IMR-90 (cell line): ENCODE measurements at regions of chr17 and their contacts with region 1.

Region 1: DNA sequence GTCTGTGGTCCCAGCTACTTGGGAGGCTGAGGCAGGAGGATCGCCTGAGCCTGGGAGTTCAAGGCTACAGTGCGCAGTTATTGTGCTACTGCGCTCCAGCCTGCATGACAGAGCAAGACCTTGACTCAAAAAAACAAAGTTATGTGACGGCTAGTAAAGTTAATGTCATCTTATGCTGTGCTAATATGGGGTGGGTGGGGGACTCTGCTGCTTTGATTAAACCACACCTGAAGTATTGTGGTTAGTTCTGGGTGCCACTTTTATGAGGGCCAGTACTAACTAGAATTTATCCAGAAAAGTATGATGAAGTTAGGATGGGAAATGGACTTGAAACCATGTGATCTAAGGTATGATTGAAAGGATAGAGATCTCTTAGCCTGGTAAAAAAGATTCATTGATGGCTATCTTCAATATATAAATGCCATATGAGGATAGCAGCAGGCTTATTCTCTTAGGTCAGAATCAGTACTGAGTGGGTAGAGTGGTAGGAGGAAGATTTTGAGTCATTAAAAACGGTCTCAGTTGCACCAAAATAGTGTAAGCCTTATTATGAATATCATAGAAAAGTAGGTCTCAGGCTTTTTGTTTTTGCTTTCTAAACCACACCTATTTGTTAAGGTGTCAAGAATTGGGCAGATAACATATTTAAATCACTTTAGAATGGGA is 5.6 kb downstream of the WSB1 start:
- DNase-seq: no peak
- ATAC-seq: no peak
- H3K4me3 ChIP-seq: no peak overlapping the region
- H3K27ac ChIP-seq: no peak overlapping the region
- H3K4me1 ChIP-seq: peaks cover 11% of the 10 kb centered on the region; the same call in 1 of the 2 replicates
- H3K27me3 ChIP-seq: no peaks in the 10 kb centered on the region
- CTCF ChIP-seq: no peak
- POLR2A ChIP-seq: no peak
- RAD21 ChIP-seq: no peak

Region 2: GRCh38 chr17:27315322-27315721 is 15.8 kb after region 1 on chr17:
- CTCF ChIA-PET with region 1: no interaction called
- POLR2A ChIA-PET with region 1: interaction called, 3 read pairs
- dilution Hi-C with region 1: no loop called
- in situ Hi-C with region 1: no loop called
- intact Hi-C with region 1: loop called (anchors 2 kb)
- DNase-seq: peak; percentile 94
- ATAC-seq: peak; percentile 91
- H3K4me3 ChIP-seq: no peak overlapping the region
- H3K27ac ChIP-seq: no peak overlapping the region; the same call in 1 of the 2 replicates
- H3K4me1 ChIP-seq: peaks cover 11% of the 10 kb centered on the region
- H3K27me3 ChIP-seq: no peaks in the 10 kb centered on the region
- CTCF ChIP-seq: no peak
- POLR2A ChIP-seq: no peak
- RAD21 ChIP-seq: no peak

Region 3: DNA sequence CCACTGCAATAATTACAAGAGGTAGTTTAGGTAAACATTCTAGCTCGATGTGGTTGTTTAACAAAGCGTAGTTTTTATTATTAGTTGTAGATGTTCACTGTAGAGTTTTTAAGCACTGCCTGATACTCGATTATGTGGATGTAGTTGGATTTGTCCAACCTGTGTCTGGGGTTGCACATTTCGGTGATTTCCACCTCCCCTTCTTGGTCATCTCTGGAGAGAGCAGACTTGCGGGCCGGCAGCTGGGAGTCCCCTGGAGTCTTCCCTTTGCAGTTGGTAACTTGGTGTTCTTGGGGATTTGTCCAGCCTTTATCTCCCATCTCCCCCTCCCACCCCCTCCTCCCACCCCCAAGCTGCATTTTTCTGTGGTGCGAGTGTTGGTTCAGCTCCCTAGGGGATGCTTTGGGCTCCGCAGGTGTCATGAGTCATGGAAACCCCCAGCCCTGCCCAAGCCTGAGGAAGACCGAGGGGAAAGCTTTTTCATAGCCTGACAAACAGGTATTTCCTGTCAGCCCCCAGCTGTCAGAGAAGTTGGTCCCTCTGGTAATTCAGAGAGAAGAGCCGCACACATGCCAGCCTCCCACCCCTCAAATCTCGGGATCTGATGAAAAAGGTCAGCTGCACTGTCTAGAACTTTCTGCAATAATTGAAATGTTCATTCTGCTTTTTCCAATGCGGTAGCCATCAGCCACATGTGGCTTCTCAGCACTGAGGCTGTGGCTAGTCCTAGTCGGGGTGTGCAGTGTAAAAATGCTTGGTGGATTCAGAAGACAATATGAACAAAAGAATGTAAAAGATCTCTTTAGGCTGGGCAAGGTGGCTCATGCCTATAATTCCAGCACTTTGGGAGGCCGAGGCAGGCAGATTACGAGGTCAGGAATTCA is 207.1 kb after region 1 on chr17:
- CTCF ChIA-PET with region 1: no interaction called
- POLR2A ChIA-PET with region 1: no interaction called
- dilution Hi-C with region 1: no loop called
- in situ Hi-C with region 1: no loop called
- intact Hi-C with region 1: no loop called
- DNase-seq: no peak
- ATAC-seq: no peak
- H3K4me3 ChIP-seq: no peak overlapping the region
- H3K27ac ChIP-seq: no peak overlapping the region
- H3K4me1 ChIP-seq: peaks cover 39% of the 10 kb centered on the region
- H3K27me3 ChIP-seq: no peaks in the 10 kb centered on the region
- CTCF ChIP-seq: no peak
- POLR2A ChIP-seq: no peak
- RAD21 ChIP-seq: no peak